Activated naive CD8-positive, alpha-beta T cell treated with anti-CD3 and anti-CD28 coated beads, Interleukin-2, amount 10 ng/mL, durations not matched to agents 7 days and 5 days (primary cell): ENCODE measurements at regions of chr20 and their contacts with region 1.

Region 1: GRCh38 chr20:35619196-35620095 is 3.8 kb downstream of the SPAG4 start:
- DNase-seq: peak; percentile 83
- ATAC-seq: peak; percentile 41
- H3K4me3 Mint-ChIP-seq: peak overlapping the region; percentile 86
- H3K27ac Mint-ChIP-seq: peak overlapping the region; percentile 80
- H3K4me1 Mint-ChIP-seq: peaks cover 18% of the 10 kb centered on the region
- H3K27me3 Mint-ChIP-seq: no peaks in the 10 kb centered on the region

Region 2: GRCh38 chr20:35490736-35491181 is 128.7 kb before region 1 on chr20:
- POLR2A ChIA-PET with region 1: interaction called, 17 read pairs
- DNase-seq: peak; percentile 70
- ATAC-seq: peak; percentile 98
- H3K4me3 Mint-ChIP-seq: peak overlapping the region; percentile 99
- H3K27ac Mint-ChIP-seq: peak overlapping the region; percentile 99
- H3K4me1 Mint-ChIP-seq: peaks cover 33% of the 10 kb centered on the region
- H3K27me3 Mint-ChIP-seq: no peaks in the 10 kb centered on the region

Region 3: DNA sequence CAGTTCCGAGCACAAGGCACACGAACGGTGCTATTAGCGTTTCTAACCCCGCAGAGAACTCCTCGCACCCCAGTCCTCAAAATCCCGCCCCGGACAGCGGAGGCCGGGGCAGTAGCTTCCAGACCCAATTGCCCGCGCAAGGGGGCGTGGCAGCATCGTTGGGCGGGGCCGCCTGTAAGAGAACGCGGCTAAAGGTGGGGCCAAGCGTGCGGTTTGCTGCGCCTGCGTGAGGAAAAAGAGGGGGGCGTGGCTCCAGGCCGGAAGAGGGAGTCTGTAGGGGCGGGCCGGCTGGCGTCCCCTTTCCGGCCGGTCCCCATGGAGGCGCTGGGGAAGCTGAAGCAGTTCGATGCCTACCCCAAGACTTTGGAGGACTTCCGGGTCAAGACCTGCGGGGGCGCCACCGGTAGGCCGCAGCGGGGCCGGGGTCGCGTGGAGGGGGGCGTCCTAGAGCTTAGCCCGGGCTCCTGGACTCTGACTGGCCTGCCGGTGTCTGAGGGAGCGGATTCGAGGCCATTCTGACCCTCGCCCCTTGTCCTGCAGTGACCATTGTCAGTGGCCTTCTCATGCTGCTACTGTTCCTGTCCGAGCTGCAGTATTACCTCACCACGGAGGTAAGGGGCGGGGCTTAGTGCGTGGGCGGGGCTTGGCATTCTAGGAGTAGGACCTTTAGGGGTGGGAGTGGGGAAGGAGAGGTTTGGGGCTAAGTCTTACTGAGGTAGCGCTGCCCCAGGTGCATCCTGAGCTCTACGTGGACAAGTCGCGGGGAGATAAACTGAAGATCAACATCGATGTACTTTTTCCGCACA is 77.5 kb before region 1 on chr20 and contains the start of gene ERGIC3:
- POLR2A ChIA-PET with region 1: interaction called, 12 read pairs
- DNase-seq: peak; percentile 97
- ATAC-seq: peak; percentile 94
- H3K4me3 Mint-ChIP-seq: peak within 1 kb of the TSS; percentile 94
- H3K27ac Mint-ChIP-seq: peak within 1 kb of the TSS; percentile 94
- H3K4me1 Mint-ChIP-seq: peaks cover 14% of the 10 kb centered on the region
- H3K27me3 Mint-ChIP-seq: peaks cover 4% of the 10 kb centered on the region
- total RNA-seq, gene ERGIC3: 123 to 125 TPM

Region 4: DNA sequence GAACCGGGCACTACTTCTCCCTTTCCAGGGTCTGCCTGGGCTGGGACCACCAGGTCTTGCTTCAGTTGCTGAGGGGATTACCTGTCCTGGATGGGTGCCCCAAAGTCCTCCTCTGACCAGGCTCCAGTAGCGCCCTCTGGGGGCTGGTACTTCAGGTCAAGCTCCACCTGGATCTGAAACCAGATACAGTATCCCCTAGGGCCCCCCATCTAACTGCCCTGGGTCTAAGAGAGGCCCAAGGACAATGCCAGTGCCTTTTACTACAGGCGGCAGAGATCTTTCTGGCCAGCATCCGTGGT is 15.0 kb before region 1 on chr20:
- POLR2A ChIA-PET with region 1: interaction called, 11 read pairs
- DNase-seq: no peak
- ATAC-seq: no peak
- H3K4me3 Mint-ChIP-seq: no peak overlapping the region
- H3K27ac Mint-ChIP-seq: no peak overlapping the region
- H3K4me1 Mint-ChIP-seq: peaks cover 11% of the 10 kb centered on the region
- H3K27me3 Mint-ChIP-seq: peaks cover 24% of the 10 kb centered on the region

Region 5: GRCh38 chr20:35664544-35665221 is 45.2 kb after region 1 on chr20 and contains the starts of genes CPNE1 and RBM12:
- POLR2A ChIA-PET with region 1: interaction called, 68 read pairs
- DNase-seq: peak; percentile 96
- ATAC-seq: peak; percentile 82
- H3K4me3 Mint-ChIP-seq: peak within 1 kb of the TSS; percentile 79
- H3K27ac Mint-ChIP-seq: peak within 1 kb of the TSS; percentile 99
- H3K4me1 Mint-ChIP-seq: peaks cover 35% of the 10 kb centered on the region
- H3K27me3 Mint-ChIP-seq: no peaks in the 10 kb centered on the region
- total RNA-seq, gene CPNE1: 296 to 327 TPM
- total RNA-seq, gene RBM12: 116 to 120 TPM

Region 6: DNA sequence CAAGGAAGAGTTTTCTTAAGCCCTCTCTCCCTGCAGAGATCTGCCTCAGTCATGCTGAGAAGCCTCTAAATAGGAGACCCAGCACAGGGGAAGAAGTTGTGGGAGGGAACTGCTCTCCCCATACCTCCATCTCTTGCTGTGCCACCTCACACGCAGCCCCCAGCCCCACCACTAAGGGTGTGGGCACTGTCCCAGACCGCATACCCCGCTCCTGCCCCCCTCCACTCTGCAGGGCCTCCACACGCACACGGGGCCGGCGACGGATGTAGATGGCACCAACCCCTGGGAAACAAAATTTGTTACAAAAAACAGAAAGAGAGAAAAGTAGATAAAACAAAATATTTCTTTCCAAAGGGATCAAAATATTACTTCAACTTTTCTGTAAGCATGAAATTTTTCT is 55.5 kb after region 1 on chr20:
- POLR2A ChIA-PET with region 1: no interaction called
- DNase-seq: no peak
- ATAC-seq: no peak
- H3K4me3 Mint-ChIP-seq: no peak overlapping the region
- H3K27ac Mint-ChIP-seq: no peak overlapping the region
- H3K4me1 Mint-ChIP-seq: no peaks in the 10 kb centered on the region
- H3K27me3 Mint-ChIP-seq: no peaks in the 10 kb centered on the region

Region 7: DNA sequence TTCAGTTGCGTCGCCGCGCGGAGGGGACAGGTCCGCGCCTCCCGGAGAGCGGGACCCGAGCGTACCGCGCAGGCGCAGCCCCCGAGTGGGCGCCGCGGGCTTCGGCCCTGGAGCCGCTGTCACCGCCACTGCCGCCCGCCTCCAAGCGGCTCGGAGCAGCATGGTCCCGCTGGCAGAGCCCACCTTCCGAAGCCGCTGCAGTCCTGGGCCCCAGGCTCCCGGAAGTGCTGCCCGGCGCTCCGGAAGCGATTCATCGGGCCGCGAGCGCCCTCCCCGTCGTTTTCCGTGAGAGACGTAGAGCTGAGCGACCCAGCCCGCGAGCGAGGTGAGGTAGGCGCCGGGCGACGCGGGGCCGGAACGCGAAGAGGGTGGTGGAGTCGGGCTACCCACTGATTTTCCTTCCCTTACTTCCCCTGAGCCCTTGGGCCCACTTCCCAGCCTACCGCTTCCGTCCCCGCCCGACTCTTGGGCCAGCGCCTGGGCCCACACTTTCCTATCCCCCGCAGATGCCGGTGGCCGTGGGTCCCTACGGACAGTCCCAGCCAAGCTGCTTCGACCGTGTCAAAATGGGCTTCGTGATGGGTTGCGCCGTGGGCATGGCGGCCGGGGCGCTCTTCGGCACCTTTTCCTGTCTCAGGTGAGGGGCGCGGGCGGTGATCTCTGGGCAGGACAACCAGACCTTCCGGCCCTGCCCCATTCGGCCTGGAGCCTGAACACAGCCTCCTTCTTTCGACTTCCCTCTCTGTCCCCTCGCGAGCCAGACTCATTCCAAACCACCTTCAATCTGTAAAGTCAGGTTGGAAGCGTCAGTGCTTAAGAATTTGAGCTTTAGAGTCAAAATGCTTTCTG is 79.9 kb after region 1 on chr20 and contains the starts of genes NFS1 and ROMO1:
- POLR2A ChIA-PET with region 1: interaction called, 15 read pairs
- DNase-seq: peak; percentile 88
- ATAC-seq: peak; percentile 91
- H3K4me3 Mint-ChIP-seq: peak within 1 kb of the TSS; percentile 93
- H3K27ac Mint-ChIP-seq: peak within 1 kb of the TSS; percentile 92
- H3K4me1 Mint-ChIP-seq: peaks cover 26% of the 10 kb centered on the region
- H3K27me3 Mint-ChIP-seq: no peaks in the 10 kb centered on the region
- total RNA-seq, gene NFS1: 33.1 to 33.8 TPM
- total RNA-seq, gene ROMO1: 96.9 to 112 TPM